Activated naive CD8-positive, alpha-beta T cell treated with anti-CD3 and anti-CD28 coated beads, Interleukin-2, amount 10 ng/mL, durations not matched to agents 7 days and 5 days (primary cell): ENCODE measurements at regions of chr2 and their contacts with region 1.

Region 1: GRCh38 chr2:84905181-84906107 is at the start of gene TMSB10:
- DNase-seq: peak; percentile 96
- ATAC-seq: peak; percentile 48
- H3K4me3 Mint-ChIP-seq: peak within 1 kb of the TSS; percentile 98
- H3K27ac Mint-ChIP-seq: peak within 1 kb of the TSS; percentile 94
- H3K4me1 Mint-ChIP-seq: peaks cover 70% of the 10 kb centered on the region
- H3K27me3 Mint-ChIP-seq: no peaks in the 10 kb centered on the region
- total RNA-seq, gene TMSB10: 4,217 to 4,653 TPM

Region 2: GRCh38 chr2:84846041-84846663 is 59.3 kb before region 1 on chr2:
- POLR2A ChIA-PET with region 1: interaction called, 16 read pairs
- DNase-seq: no peak
- ATAC-seq: peak; percentile 78
- H3K4me3 Mint-ChIP-seq: peak overlapping the region; percentile 69
- H3K27ac Mint-ChIP-seq: peak overlapping the region; percentile 93
- H3K4me1 Mint-ChIP-seq: peaks cover 84% of the 10 kb centered on the region
- H3K27me3 Mint-ChIP-seq: no peaks in the 10 kb centered on the region

Region 3: GRCh38 chr2:84881581-84882414 is 23.6 kb before region 1 on chr2:
- POLR2A ChIA-PET with region 1: interaction called, 404 read pairs
- DNase-seq: peak; percentile 84
- ATAC-seq: peak; percentile 63
- H3K4me3 Mint-ChIP-seq: peak overlapping the region; percentile 93
- H3K27ac Mint-ChIP-seq: peak overlapping the region; percentile 97
- H3K4me1 Mint-ChIP-seq: peaks cover 49% of the 10 kb centered on the region
- H3K27me3 Mint-ChIP-seq: no peaks in the 10 kb centered on the region

Region 4: DNA sequence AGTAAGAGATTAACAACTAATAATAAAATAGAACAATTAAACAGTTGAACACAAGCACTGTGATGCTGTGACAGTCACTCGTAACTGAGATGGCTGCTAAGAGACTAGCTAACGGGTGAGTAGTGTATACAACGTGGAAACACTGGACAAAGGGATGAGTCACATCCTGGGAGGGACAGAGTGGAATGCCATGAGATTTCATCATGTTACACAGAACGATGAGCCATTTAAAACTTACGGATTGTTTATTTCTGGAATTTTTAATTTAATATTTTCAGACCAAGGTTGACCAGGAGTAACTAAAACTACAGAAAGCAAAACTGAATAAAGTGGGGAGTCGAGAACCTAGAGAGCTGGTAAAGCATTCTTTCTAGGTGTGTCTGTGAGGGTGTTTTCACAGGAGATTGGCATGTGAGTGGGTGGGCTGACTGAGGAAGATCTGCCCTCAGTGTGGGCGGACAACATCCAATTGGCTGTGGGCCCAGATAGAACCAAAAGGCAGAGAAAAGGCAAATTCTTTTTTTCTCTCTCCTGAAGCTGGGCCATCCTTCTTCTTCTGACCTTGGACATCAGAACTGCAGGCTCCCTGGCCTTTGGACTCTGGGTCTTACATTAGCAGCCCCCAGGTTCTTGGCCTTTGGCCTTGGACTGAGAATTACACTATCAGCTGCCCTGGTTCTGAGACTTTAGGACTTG is 14.6 kb after region 1 on chr2:
- POLR2A ChIA-PET with region 1: interaction called, 116 read pairs
- DNase-seq: no peak
- ATAC-seq: peak; percentile 57
- H3K4me3 Mint-ChIP-seq: peak overlapping the region; percentile 76
- H3K27ac Mint-ChIP-seq: peak overlapping the region; percentile 81
- H3K4me1 Mint-ChIP-seq: peaks cover 39% of the 10 kb centered on the region
- H3K27me3 Mint-ChIP-seq: no peaks in the 10 kb centered on the region

Region 5: GRCh38 chr2:84939426-84940087 is 34.1 kb after region 1 on chr2:
- POLR2A ChIA-PET with region 1: interaction called, 51 read pairs
- DNase-seq: peak; percentile 70
- ATAC-seq: peak; percentile 93
- H3K4me3 Mint-ChIP-seq: peak overlapping the region; percentile 87
- H3K27ac Mint-ChIP-seq: peak overlapping the region; percentile 99
- H3K4me1 Mint-ChIP-seq: peaks cover 37% of the 10 kb centered on the region
- H3K27me3 Mint-ChIP-seq: no peaks in the 10 kb centered on the region

Region 6: DNA sequence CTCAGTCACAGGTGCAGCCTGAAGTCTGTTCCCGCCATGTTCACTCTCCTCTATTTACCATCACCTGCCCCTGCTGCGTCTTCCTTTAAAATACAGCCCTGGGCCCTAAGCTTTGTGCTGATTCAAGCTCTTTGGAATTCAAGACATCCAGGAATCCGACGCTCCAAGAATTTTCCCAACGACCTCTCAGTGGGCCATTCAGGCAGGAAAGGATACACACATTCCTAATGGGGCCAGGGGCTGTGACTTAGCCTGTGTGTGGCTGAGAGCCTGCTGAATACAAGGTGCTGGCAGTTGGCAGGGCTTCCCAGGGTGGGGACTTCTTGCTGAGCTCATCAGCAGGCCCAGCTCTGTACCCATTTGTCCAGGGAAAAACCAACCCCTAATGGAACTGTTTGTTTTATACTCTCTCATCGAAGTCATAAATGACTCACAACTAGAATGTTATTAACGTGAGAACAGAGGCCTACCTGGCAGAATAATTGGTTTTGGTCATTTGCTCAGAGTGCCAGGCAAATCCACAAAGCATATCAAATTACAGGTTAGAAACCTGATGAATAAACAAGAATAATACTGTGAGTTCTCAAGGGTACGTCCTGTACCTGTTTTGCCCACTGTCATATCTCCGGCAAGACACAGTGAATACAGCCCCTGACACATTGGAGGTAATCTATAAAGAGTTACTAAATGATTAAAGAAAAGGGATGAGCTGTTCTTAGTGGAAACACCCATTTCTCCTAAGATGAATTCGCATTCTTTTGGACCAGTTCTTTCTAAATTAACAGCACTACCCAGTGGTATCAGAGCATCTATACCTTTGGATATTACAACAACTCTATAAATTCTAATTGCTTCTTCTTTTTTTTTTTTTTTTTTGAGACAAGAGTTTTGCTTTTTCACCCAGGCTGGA is 52.9 kb after region 1 on chr2:
- POLR2A ChIA-PET with region 1: no interaction called
- DNase-seq: peak; percentile 10
- ATAC-seq: no peak
- H3K4me3 Mint-ChIP-seq: no peak overlapping the region
- H3K27ac Mint-ChIP-seq: no peak overlapping the region
- H3K4me1 Mint-ChIP-seq: peaks cover 16% of the 10 kb centered on the region
- H3K27me3 Mint-ChIP-seq: no peaks in the 10 kb centered on the region